Activated CD4-positive, alpha-beta T cell treated with anti-CD3 and anti-CD28 coated beads for 36 hours (primary cell): ENCODE measurements at regions of chr10 and their contacts with region 1.

Region 1: DNA sequence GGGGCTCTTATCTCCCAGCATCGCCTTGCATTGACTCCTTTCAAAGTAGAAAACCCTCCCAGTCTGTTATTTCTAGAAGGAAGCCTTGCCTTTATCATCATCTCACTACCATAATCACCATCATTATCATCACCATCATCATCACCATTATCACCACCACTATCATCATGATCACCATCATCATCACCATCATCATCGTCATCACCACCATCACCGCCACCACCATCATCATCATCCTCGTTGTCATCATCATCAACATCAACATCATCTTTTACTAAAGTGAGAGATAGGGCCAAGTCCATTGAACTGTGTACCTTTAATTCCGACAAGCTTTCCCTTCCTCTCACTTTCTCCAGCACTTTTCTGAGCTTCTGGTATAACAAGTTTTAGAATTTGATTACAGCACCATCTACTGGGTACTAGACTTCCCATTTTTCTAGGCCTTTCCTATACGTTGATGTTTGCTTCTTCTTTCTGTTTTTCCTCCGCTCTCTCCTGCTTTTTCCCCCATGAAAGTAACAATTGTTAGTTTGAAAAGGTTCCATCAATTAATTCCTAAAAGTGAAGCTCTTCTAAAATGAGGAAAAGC is 226.4 kb downstream of the BUB3 start:
- DNase-seq: no peak
- ATAC-seq: no peak
- H3K4me3 Mint-ChIP-seq: no peak overlapping the region
- H3K27ac Mint-ChIP-seq: no peak overlapping the region
- H3K4me1 Mint-ChIP-seq: no peaks in the 10 kb centered on the region
- H3K27me3 Mint-ChIP-seq: peaks cover 6% of the 10 kb centered on the region

Region 2: GRCh38 chr10:121732172-121732571 is 1648.4 kb before region 1 on chr10:
- CTCF ChIA-PET with region 1: no interaction called
- POLR2A ChIA-PET with region 1: no interaction called
- intact Hi-C with region 1: no loop called
- DNase-seq: no peak
- ATAC-seq: no peak
- H3K4me3 Mint-ChIP-seq: no peak overlapping the region
- H3K27ac Mint-ChIP-seq: no peak overlapping the region
- H3K4me1 Mint-ChIP-seq: no peaks in the 10 kb centered on the region
- H3K27me3 Mint-ChIP-seq: peaks cover 41% of the 10 kb centered on the region

Region 3: DNA sequence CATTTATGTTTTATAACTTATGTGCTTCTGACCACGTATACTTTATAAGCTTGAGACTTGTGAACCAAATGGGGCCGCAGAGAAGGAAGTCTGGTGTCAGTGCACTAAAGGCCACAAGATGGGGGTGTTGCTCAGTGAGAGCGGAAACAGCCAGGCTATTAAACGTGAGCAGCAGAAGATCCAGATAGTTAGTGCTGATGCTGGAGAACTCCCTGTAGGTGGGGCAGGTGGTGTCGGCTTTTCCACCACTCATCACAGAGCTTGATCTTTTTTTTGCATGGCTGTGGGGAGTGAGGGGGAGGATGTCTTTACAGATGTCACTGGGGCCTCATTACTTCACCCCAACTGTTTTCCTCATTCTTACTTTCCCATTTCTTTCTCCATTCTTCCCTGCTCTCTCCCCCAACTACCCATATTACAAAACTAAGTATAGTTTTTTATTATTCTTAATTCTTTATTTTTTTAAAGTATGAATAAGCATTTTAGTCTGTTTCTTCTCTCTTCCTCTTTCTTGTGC is 337.1 kb before region 1 on chr10:
- CTCF ChIA-PET with region 1: no interaction called
- POLR2A ChIA-PET with region 1: no interaction called
- intact Hi-C with region 1: loop called (anchors 1 to 10 kb)
- DNase-seq: peak; percentile 61
- ATAC-seq: peak; percentile 83
- H3K4me3 Mint-ChIP-seq: no peak overlapping the region
- H3K27ac Mint-ChIP-seq: no peak overlapping the region
- H3K4me1 Mint-ChIP-seq: peaks cover 9% of the 10 kb centered on the region
- H3K27me3 Mint-ChIP-seq: no peaks in the 10 kb centered on the region

Region 4: GRCh38 chr10:123139521-123140163 is 240.9 kb before region 1 on chr10:
- CTCF ChIA-PET with region 1: interaction called, 11 read pairs
- POLR2A ChIA-PET with region 1: no interaction called
- intact Hi-C with region 1: loop called in 1 of 2 experiments (anchors 2 kb)
- DNase-seq: peak; percentile 35
- ATAC-seq: no peak
- H3K4me3 Mint-ChIP-seq: no peak overlapping the region
- H3K27ac Mint-ChIP-seq: no peak overlapping the region
- H3K4me1 Mint-ChIP-seq: peaks cover 41% of the 10 kb centered on the region
- H3K27me3 Mint-ChIP-seq: peaks cover 76% of the 10 kb centered on the region